ENCODE measurements at regions of chr19 and their contacts with region 1.

Region 1: DNA sequence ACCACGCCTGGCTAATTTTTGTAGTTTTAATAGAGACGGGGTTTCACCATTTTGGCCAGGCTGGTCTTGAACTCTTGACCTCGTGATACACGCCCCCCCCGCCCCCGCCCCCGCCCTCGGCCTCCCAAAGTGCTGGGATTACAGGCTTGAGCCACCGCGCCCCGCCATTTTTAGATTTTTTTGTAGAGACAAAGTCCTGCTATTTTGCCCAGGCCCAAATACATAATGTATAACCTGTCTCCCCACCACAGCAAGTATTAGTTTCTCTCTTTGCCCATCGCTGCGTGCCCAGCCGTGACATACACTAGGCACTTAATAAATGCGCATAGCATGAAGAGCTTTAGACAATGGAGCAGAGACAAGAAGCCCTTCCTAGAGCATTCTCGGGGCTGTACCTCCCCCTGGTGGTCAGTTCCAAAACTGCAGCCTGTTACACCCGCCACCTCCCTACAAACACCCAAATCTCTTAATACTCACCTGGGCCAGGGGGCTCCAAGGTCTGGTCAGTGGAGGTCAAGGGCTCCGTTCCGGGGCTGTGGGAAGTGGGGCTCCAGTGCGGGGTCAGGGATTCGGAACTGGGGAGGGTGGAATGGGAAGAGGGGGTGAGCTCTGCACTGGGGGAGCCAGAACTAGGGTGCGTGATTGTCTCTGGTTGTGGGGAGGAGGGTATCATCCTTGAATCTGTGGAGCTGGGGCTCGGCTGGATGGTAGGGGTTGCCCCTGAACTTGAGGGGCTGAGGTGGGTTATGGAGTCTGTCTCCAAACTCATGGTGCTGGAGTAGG is 22.5 kb downstream of the IQCN start:
- DNase-seq: peak; percentile 57
- H3K4me3 ChIP-seq: no peak overlapping the region
- H3K27ac ChIP-seq: no peak overlapping the region
- H3K4me1 ChIP-seq: peaks cover 5% of the 10 kb centered on the region
- H3K27me3 ChIP-seq: no peaks in the 10 kb centered on the region
- CTCF ChIP-seq: peak; percentile 85 to 92

Region 2: DNA sequence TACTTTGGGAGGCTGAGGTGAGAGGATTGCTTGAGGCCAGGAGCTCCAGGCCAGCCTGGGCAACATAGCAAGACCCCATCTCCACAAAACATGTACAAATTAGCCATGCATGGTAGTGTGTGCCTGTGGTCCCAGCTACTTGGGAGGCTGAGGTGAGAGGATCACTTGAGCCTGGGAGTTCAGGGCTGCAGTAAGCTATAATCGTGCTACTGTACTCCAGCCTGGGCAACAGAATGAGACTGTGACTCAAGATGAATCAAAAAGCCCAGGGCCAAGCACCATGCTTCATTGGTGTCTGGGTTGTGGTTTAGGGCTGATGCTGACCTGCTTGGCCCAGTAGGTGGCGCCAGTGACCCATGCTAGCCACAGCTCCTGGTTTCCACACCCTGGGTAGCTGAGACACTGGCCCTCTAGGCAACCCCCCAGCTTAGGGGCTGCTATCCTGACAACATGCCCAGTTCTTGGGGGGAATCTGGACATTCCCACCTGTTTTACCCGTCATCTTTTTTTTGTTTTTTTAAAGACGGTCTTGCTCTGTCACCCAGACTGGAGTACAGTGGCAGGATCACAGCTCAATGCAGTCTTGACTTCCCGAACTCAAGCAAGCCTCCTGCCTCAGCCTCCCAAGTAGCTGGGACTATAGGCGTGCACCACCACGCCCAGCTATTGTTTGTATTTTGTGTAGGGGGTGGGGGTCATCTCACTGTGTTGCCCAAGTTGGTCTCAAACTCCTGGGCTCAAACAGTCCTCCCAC is 313.5 kb before region 1 on chr19:
- CTCF ChIA-PET with region 1: no interaction called
- dilution Hi-C with region 1: no loop called
- in situ Hi-C with region 1: no loop called
- intact Hi-C with region 1: loop called (anchors 5 kb)
- DNase-seq: peak; percentile 90
- H3K4me3 ChIP-seq: no peak overlapping the region
- H3K27ac ChIP-seq: no peak overlapping the region
- H3K4me1 ChIP-seq: peaks cover 11% of the 10 kb centered on the region
- H3K27me3 ChIP-seq: no peaks in the 10 kb centered on the region
- CTCF ChIP-seq: peak; percentile 93 to 99

Region 3: GRCh38 chr19:18063463-18063862 is 188.3 kb before region 1 on chr19:
- CTCF ChIA-PET with region 1: interaction called, 4 read pairs
- dilution Hi-C with region 1: no loop called
- in situ Hi-C with region 1: no loop called
- intact Hi-C with region 1: loop called (anchors 1 kb)
- DNase-seq: peak; percentile 40
- H3K4me3 ChIP-seq: no peak overlapping the region
- H3K27ac ChIP-seq: no peak overlapping the region
- H3K4me1 ChIP-seq: peaks cover 2% of the 10 kb centered on the region
- H3K27me3 ChIP-seq: peaks cover 2% of the 10 kb centered on the region
- CTCF ChIP-seq: peak; percentile 26 to 45

Region 4: DNA sequence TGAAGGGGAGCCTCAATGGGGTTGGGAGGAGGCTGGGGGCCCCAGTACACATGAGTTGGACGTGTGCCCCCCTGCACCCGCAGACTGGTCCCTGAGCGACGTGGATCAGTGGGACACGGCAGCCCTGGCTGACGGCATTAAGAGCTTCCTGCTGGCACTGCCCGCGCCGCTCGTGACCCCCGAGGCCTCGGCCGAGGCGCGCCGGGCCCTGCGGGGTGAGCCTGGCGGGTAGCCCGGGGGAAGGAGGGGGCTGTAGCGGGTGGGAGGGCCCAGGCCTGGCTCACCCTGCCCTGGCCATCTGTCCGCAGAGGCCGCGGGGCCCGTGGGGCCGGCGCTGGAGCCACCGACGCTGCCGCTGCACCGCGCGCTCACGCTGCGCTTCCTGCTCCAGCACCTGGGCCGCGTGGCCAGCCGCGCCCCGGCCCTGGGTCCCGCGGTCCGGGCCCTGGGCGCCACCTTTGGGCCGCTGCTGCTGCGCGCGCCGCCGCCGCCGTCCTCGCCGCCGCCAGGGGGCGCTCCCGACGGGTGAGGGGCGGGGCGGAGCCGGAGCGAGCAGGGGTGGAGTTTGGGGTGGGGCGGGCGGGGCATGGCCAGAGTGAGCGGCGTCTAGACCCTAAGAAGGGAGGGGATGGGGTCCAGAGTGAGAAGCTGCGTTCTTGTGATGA is 90.7 kb before region 1 on chr19:
- CTCF ChIA-PET with region 1: no interaction called
- dilution Hi-C with region 1: no loop called
- in situ Hi-C with region 1: no loop called
- intact Hi-C with region 1: loop called (anchors 1 kb)
- DNase-seq: peak; percentile 57
- H3K4me3 ChIP-seq: peak overlapping the region in 2 of 3 experiments; percentile 43 to 44
- H3K27ac ChIP-seq: no peak overlapping the region
- H3K4me1 ChIP-seq: peaks cover 40% of the 10 kb centered on the region
- H3K27me3 ChIP-seq: no peaks in the 10 kb centered on the region
- CTCF ChIP-seq: peak; percentile 41 to 50

Region 5: GRCh38 chr19:18192673-18193387 is 58.9 kb before region 1 on chr19 and contains the start of gene MPV17L2:
- CTCF ChIA-PET with region 1: interaction called, 7 read pairs
- dilution Hi-C with region 1: no loop called
- in situ Hi-C with region 1: no loop called
- intact Hi-C with region 1: loop called (anchors 1 kb)
- DNase-seq: peak; percentile 100
- H3K4me3 ChIP-seq: peak within 1 kb of the TSS; percentile 82 to 89 (median 83)
- H3K27ac ChIP-seq: peak within 1 kb of the TSS; percentile 77
- H3K4me1 ChIP-seq: peaks cover 20% of the 10 kb centered on the region
- H3K27me3 ChIP-seq: no peaks in the 10 kb centered on the region
- CTCF ChIP-seq: no peak
- total RNA-seq, gene MPV17L2: 16.8 to 22.5 TPM

Region 6: GRCh38 chr19:19420570-19421298 is 1169.0 kb after region 1 on chr19:
- CTCF ChIA-PET with region 1: no interaction called
- dilution Hi-C with region 1: no loop called
- in situ Hi-C with region 1: no loop called
- intact Hi-C with region 1: no loop called
- DNase-seq: no peak
- H3K4me3 ChIP-seq: no peak overlapping the region
- H3K27ac ChIP-seq: no peak overlapping the region
- H3K4me1 ChIP-seq: no peaks in the 10 kb centered on the region
- H3K27me3 ChIP-seq: no peaks in the 10 kb centered on the region
- CTCF ChIP-seq: no peak